B cell (primary cell): ENCODE measurements at regions of chr7 and their contacts with region 1.

Region 1: DNA sequence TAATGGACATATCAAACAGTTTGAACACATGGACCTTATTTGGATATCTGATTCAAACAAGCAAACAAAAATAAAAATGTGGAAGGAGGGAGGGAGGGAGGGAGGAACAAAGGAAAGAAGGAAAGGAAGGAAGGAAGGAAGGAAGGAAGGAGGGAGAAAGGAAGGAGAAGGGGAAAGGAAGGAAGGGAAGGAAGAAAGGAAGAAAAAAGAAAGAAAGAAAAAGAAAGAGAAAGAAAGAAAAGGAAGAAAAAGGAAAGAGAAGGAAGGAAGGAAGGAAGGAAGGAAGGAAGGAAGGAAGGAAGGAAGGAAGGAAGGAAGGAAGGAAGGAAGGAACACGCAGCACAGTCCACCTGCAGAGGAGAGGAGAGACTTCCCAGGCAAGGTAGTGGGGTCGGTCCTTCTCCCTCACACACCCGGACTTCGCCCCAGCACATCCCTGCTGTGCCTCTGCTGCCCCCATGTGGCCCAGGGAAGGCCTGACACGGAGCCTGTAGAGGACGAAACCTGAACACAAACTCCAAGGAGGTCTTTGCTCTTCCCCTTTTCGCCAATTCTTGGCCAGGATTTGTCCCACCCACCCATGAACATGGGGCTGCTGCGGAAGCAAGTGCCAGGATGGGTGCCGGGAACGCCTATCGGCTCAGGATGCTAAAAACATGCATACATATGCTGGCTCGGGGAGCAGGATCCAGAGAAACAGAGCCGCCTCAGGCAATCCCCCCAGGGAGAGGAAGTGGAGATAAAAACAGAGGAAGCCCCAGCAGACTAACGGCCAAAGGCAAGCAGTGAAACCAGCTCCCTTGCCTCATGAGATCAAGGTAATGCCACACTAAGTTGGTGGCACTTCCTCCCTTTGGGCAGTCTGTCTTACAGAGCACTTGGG is 52.3 kb upstream of the DGKI start:
- DNase-seq: peak; percentile 78
- ATAC-seq: peak; percentile 87
- H3K4me3 ChIP-seq: peak overlapping the region in 3 of 5 experiments; percentile 37 to 46 (median 45)
- H3K4me3 Mint-ChIP-seq: peak overlapping the region; percentile 81
- H3K27ac ChIP-seq: peak overlapping the region; percentile 34 to 59
- H3K27ac Mint-ChIP-seq: peak overlapping the region; percentile 83
- H3K4me1 ChIP-seq: peaks cover 14 to 18% of the 10 kb centered on the region in 2 donors
- H3K4me1 Mint-ChIP-seq: peaks cover 27% of the 10 kb centered on the region
- H3K27me3 ChIP-seq: no peaks in the 10 kb centered on the region
- H3K27me3 Mint-ChIP-seq: no peaks in the 10 kb centered on the region
- CTCF ChIP-seq: peak; percentile 92

Region 2: DNA sequence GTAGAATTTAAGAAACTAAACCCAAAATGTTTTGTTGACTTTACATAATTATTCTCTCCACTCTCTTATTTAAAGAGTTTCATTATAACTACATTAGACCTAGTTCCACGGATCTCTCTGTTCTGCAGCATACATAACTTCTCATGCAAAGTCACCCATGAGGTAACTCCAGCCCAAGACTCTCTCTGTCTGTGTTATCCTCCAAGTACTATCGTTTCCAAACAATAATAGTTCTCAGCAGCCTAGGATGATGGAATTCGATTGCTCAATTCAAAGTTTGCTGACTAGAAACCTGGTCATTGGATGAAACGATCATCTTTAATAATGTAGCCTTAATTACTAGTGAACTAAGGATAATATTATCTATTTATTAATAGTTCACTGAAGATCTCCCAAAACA is 352.4 kb before region 1 on chr7:
- CTCF ChIA-PET with region 1: no interaction called
- POLR2A ChIA-PET with region 1: no interaction called
- intact Hi-C with region 1: no loop called
- DNase-seq: no peak
- ATAC-seq: no peak
- H3K4me3 ChIP-seq: no peak overlapping the region
- H3K4me3 Mint-ChIP-seq: no peak overlapping the region
- H3K27ac ChIP-seq: no peak overlapping the region
- H3K27ac Mint-ChIP-seq: no peak overlapping the region
- H3K4me1 ChIP-seq: no peaks in the 10 kb centered on the region
- H3K4me1 Mint-ChIP-seq: no peaks in the 10 kb centered on the region
- H3K27me3 ChIP-seq: no peaks in the 10 kb centered on the region
- H3K27me3 Mint-ChIP-seq: no peaks in the 10 kb centered on the region
- CTCF ChIP-seq: no peak

Region 3: GRCh38 chr7:138002096-138002827 is 103.2 kb after region 1 on chr7:
- CTCF ChIA-PET with region 1: interaction called, 385 read pairs
- POLR2A ChIA-PET with region 1: no interaction called
- intact Hi-C with region 1: no loop called
- DNase-seq: peak; percentile 99
- ATAC-seq: peak; percentile 91
- H3K4me3 ChIP-seq: peak overlapping the region; percentile 66 to 99 (median 95)
- H3K4me3 Mint-ChIP-seq: peak overlapping the region; percentile 94
- H3K27ac ChIP-seq: peak overlapping the region; percentile 69 to 84
- H3K27ac Mint-ChIP-seq: peak overlapping the region; percentile 90
- H3K4me1 ChIP-seq: peaks cover 14 to 22% of the 10 kb centered on the region in 2 donors
- H3K4me1 Mint-ChIP-seq: peaks cover 30% of the 10 kb centered on the region
- H3K27me3 ChIP-seq: no peaks in the 10 kb centered on the region
- H3K27me3 Mint-ChIP-seq: no peaks in the 10 kb centered on the region
- CTCF ChIP-seq: peak; percentile 98

Region 4: GRCh38 chr7:138015096-138015495 is 116.0 kb after region 1 on chr7:
- CTCF ChIA-PET with region 1: interaction called, 385 read pairs
- POLR2A ChIA-PET with region 1: no interaction called
- intact Hi-C with region 1: no loop called
- DNase-seq: no peak
- ATAC-seq: no peak
- H3K4me3 ChIP-seq: no peak overlapping the region
- H3K4me3 Mint-ChIP-seq: no peak overlapping the region
- H3K27ac ChIP-seq: no peak overlapping the region
- H3K27ac Mint-ChIP-seq: no peak overlapping the region
- H3K4me1 ChIP-seq: peaks cover 0 to 9% of the 10 kb centered on the region in 2 donors
- H3K4me1 Mint-ChIP-seq: peaks cover 9% of the 10 kb centered on the region
- H3K27me3 ChIP-seq: no peaks in the 10 kb centered on the region
- H3K27me3 Mint-ChIP-seq: no peaks in the 10 kb centered on the region
- CTCF ChIP-seq: no peak

Region 5: GRCh38 chr7:138459413-138460175 is 560.5 kb after region 1 on chr7:
- CTCF ChIA-PET with region 1: no interaction called
- POLR2A ChIA-PET with region 1: no interaction called
- intact Hi-C with region 1: loop called (anchors 10 kb)
- DNase-seq: peak; percentile 99
- ATAC-seq: peak; percentile 87
- H3K4me3 ChIP-seq: peak overlapping the region; percentile 40 to 73 (median 62)
- H3K4me3 Mint-ChIP-seq: peak overlapping the region; percentile 91
- H3K27ac ChIP-seq: peak overlapping the region in 1 of 2 donors; percentile 56
- H3K27ac Mint-ChIP-seq: peak overlapping the region; percentile 94
- H3K4me1 ChIP-seq: peaks cover 9 to 14% of the 10 kb centered on the region in 2 donors
- H3K4me1 Mint-ChIP-seq: peaks cover 19% of the 10 kb centered on the region
- H3K27me3 ChIP-seq: no peaks in the 10 kb centered on the region
- H3K27me3 Mint-ChIP-seq: peaks cover 3% of the 10 kb centered on the region
- CTCF ChIP-seq: no peak